ENCODE measurements at regions of chr15 and their contacts with region 1.

Region 1: GRCh38 chr15:75042730-75043508 is 19.5 kb downstream of the PPCDC start:
- DNase-seq: peak; percentile 68 to 86 (median 72)
- ATAC-seq: peak; percentile 66
- H3K4me3 ChIP-seq: no peak overlapping the region; the same call in 1 of the 2 replicates
- H3K27ac ChIP-seq: peak overlapping the region; percentile 91
- H3K4me1 ChIP-seq: peaks cover 53 to 57% of the 10 kb centered on the region in 2 experiments
- H3K27me3 ChIP-seq: no peaks in the 10 kb centered on the region
- CTCF ChIP-seq: peak; percentile 41 to 55 (median 55); a peak in 5 of 6 replicates
- EP300 ChIP-seq: peak; percentile 80
- POLR2A ChIP-seq: no peak
- RAD21 ChIP-seq: peak in 1 of 2 experiments; percentile 63; a peak in 3 of 4 replicates

Region 2: DNA sequence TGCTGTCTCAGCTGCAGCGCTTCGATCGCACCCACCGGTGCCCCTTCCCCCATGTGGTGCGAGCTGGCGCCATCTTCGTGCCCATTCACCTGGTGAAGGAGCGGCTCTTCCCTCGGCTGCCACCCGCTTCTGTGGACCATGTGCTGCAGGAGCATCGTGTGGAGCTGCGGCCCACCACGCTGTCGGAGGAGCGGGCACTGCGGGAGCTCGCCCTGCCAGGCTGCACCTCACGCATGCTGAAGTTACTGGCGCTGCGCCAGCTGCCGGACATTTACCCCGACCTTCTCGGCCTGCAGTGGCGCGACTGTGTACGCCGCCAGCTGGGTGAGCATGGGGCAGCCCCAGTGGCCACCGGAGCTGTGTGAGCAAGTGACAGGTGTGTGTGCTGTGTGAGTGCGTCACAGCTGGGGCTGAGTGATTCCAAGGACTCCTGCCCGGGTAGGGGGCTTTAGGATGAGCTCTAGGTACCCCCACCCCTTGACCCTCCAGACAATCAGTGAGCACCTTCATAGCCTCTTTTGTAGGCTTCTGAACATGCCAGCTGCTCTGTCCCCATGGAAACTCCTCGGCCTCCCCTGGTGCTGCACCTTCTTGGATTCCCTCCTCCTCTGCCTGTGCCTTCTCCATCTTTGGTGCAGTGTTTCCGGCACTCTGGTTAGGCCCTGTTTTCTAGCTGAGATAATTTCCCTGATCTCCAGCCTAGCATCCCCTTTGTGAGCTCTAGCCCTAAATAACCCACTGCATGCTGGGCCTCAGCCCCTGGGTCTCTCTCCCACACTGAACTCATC is 165.8 kb after region 1 on chr15:
- CTCF ChIA-PET with region 1: interaction called, 19 read pairs
- POLR2A ChIA-PET with region 1: interaction called, 16 read pairs
- in situ Hi-C with region 1: no loop called
- intact Hi-C with region 1: no loop called
- DNase-seq: no peak
- ATAC-seq: no peak
- H3K4me3 ChIP-seq: no peak overlapping the region
- H3K27ac ChIP-seq: no peak overlapping the region
- H3K4me1 ChIP-seq: peaks cover 14 to 26% of the 10 kb centered on the region in 2 experiments; a peak in 4 of 5 replicates
- H3K27me3 ChIP-seq: no peaks in the 10 kb centered on the region
- CTCF ChIP-seq: no peak
- EP300 ChIP-seq: no peak
- POLR2A ChIP-seq: no peak
- RAD21 ChIP-seq: no peak

Measured in K562 (cell line).